ENCODE measurements at regions of chr11 and their contacts with region 1.

Region 1: GRCh38 chr11:47426061-47426956 is at the start of gene PSMC3:
- DNase-seq: peak; percentile 99
- ATAC-seq: peak; percentile 98
- H3K4me3 Mint-ChIP-seq: peak within 1 kb of the TSS; percentile 88
- H3K27ac Mint-ChIP-seq: peak within 1 kb of the TSS; percentile 99
- H3K4me1 Mint-ChIP-seq: peaks cover 23% of the 10 kb centered on the region
- H3K27me3 Mint-ChIP-seq: no peaks in the 10 kb centered on the region
- CTCF ChIP-seq: no peak
- total RNA-seq, gene PSMC3: 137 to 140 TPM

Region 2: GRCh38 chr11:47317064-47317828 is 109.1 kb before region 1 on chr11:
- CTCF ChIA-PET with region 1: no interaction called
- POLR2A ChIA-PET with region 1: no interaction called
- intact Hi-C with region 1: no loop called
- DNase-seq: no peak
- ATAC-seq: no peak
- H3K4me3 Mint-ChIP-seq: no peak overlapping the region
- H3K27ac Mint-ChIP-seq: peak overlapping the region; percentile 48
- H3K4me1 Mint-ChIP-seq: peaks cover 7% of the 10 kb centered on the region
- H3K27me3 Mint-ChIP-seq: no peaks in the 10 kb centered on the region
- CTCF ChIP-seq: no peak

Region 3: DNA sequence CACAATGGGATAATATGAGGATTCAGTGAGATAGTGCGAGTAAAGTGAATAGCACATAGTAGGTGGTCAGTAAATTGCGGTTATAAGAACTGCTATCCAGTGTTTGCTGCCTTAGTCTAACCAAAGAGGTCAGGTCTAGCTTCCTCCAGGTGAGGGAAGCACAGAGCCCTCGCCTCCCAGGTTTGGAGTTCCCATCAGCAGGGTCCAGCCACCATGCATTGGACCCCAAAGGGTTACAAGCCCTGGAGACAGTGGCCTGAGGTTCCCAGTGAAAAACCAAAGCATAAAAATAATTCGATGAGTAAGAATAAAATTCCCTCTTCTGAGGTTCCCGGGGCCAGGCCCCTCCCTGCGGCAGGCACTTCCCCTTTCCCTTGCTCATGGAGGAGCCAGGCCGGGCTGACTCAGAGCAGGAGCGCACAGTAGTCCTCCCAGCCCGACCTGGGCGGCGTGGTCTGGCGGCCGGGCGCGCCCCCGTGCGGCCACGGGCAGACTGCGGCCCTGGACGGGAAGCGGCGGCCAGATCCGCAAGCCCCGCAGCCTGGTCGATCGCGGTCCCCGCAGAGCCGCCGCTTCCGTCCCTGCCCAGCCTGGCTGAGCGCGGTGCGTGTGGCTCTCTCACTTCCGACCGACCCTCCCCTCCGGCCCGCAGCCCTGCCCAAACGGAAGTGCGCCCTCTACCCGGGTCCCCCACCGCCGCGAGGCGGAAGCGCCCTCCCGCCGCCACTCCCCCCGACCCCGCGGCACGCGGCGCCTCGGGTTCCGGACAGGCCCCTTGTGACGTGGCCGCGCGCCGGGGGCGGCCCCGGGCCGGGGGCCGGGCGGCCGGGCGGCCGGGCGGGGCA is 18.3 kb before region 1 on chr11 and contains the start of gene SLC39A13:
- CTCF ChIA-PET with region 1: interaction called, 90 read pairs
- POLR2A ChIA-PET with region 1: interaction called, 54 read pairs
- intact Hi-C with region 1: no loop called
- DNase-seq: peak; percentile 90
- ATAC-seq: peak; percentile 92
- H3K4me3 Mint-ChIP-seq: peak within 1 kb of the TSS; percentile 88
- H3K27ac Mint-ChIP-seq: peak within 1 kb of the TSS; percentile 94
- H3K4me1 Mint-ChIP-seq: peaks cover 21% of the 10 kb centered on the region
- H3K27me3 Mint-ChIP-seq: no peaks in the 10 kb centered on the region
- CTCF ChIP-seq: peak; percentile 79
- total RNA-seq, gene SLC39A13: 10.0 to 10.5 TPM

Region 4: DNA sequence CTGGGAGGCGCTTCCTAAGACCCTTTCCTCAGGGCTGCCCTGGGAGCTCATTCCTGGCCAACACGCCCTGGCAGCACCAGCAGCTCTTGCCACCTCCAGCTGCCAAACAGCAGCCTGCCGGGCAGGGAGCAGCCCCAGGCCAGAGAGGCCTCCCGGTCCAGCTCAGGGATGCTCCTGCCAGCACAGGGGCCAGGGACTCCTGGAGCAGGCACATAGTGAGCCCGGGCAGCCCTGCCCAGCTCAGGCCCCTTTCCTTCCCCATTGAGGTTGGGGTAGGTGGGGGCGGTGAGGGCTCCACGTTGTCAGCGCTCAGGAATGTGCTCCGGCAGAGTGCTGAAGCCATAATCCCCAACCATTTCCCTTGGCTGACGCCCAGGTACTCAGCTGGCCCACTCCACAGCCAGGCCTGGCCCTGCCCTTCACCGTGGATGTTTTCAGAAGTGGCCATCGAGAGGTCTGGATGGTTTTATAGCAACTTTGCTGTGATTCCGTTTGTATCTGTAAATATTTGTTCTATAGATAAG is 10.3 kb before region 1 on chr11:
- CTCF ChIA-PET with region 1: interaction called, 90 read pairs
- POLR2A ChIA-PET with region 1: interaction called, 54 read pairs
- intact Hi-C with region 1: no loop called
- DNase-seq: no peak
- ATAC-seq: no peak
- H3K4me3 Mint-ChIP-seq: no peak overlapping the region
- H3K27ac Mint-ChIP-seq: no peak overlapping the region
- H3K4me1 Mint-ChIP-seq: no peaks in the 10 kb centered on the region
- H3K27me3 Mint-ChIP-seq: no peaks in the 10 kb centered on the region
- CTCF ChIP-seq: no peak

Region 5: DNA sequence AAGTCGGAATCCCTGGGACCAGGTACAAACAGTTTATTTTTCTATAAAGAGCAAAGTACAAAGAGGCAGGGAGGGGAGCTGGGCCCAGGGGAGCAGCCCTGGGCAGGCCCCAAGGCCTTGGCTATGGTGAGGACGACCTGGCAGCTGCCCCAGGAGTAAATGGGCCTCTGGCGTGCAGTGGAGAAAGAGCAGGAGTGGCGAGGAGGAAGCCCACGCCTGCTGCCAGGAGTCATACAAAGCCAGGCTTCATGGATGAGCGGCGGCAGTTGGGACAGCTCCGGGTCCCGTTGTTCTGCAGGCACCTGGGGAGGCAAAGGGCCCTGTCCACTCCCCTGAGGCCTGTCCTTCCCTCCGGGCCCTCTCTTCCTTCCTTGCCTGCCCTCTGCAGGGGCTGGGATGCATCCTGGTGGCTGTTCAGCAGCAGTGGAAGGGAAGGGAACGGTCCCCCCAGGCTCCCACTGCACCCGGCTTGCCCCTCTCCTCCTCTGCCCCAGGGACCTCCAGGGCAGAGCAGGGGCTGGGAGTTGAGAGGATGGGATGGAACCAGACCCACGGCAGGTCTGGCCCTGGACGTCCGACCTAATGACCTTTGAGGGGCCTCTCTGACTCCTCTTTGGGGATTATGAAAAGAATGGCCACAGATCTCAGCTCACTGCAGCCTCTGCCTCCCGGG is 11.6 kb after region 1 on chr11:
- CTCF ChIA-PET with region 1: no interaction called
- POLR2A ChIA-PET with region 1: interaction called, 12 read pairs
- intact Hi-C with region 1: no loop called
- DNase-seq: no peak
- ATAC-seq: no peak
- H3K4me3 Mint-ChIP-seq: no peak overlapping the region
- H3K27ac Mint-ChIP-seq: no peak overlapping the region
- H3K4me1 Mint-ChIP-seq: no peaks in the 10 kb centered on the region
- H3K27me3 Mint-ChIP-seq: no peaks in the 10 kb centered on the region
- CTCF ChIP-seq: no peak

Region 6: GRCh38 chr11:47443042-47443700 is 16.9 kb after region 1 on chr11:
- CTCF ChIA-PET with region 1: interaction called, 3 read pairs
- POLR2A ChIA-PET with region 1: interaction called, 12 read pairs
- intact Hi-C with region 1: no loop called
- DNase-seq: peak; percentile 23
- ATAC-seq: peak; percentile 78
- H3K4me3 Mint-ChIP-seq: no peak overlapping the region
- H3K27ac Mint-ChIP-seq: no peak overlapping the region
- H3K4me1 Mint-ChIP-seq: peaks cover 6% of the 10 kb centered on the region
- H3K27me3 Mint-ChIP-seq: no peaks in the 10 kb centered on the region
- CTCF ChIP-seq: no peak

Region 7: DNA sequence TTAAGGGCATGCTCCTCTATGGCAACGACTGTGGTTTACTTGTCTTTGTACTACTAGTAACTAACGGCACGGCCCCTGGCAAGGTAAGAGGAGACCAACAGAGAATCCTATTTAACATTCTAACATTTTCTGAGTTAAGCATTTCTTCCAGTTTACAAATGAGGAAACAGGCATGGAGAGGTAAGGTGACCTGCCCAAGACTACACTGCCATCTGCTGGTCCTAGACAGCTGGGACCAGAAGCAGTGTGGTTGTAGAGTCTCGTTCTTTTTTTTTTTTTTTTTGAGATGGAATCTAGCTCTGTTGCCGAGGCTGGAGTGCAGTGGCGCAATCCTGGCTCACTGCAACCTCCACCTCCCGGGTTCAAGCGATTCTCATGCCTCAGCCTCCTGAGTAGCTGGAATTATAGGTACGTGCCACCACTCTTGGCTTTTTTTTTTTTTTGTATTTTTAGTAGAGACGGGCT is 27.9 kb after region 1 on chr11:
- CTCF ChIA-PET with region 1: interaction called, 16 read pairs
- POLR2A ChIA-PET with region 1: no interaction called
- intact Hi-C with region 1: no loop called
- DNase-seq: peak; percentile 83
- ATAC-seq: peak; percentile 98
- H3K4me3 Mint-ChIP-seq: no peak overlapping the region
- H3K27ac Mint-ChIP-seq: no peak overlapping the region
- H3K4me1 Mint-ChIP-seq: peaks cover 6% of the 10 kb centered on the region
- H3K27me3 Mint-ChIP-seq: no peaks in the 10 kb centered on the region
- CTCF ChIP-seq: peak; percentile 76